ENCODE measurements at regions of chr4 and their contacts with region 1.

Region 1: DNA sequence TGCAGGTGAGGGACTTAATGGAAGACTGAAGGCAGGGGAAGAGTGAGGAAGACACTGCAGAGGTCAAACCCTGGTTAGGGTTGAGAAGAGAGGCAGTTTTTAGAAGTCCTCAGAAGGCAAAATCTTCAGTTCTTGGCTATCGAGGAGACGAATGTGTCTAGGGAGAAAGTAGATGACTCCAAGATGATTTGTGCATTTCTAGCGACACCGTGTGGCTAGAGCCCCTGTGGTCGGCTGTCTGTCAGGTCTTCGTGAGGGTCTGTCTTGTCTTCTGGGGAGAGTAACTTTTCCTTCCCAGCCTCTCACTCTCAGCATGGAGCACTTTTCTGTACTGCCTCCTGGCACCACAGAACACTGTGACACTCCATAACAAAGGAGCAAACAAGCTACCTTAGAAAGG is 458.1 kb downstream of the STIM2 start:
- DNase-seq: no peak
- H3K4me3 ChIP-seq: no peak overlapping the region
- H3K27ac ChIP-seq: no peak overlapping the region
- H3K4me1 ChIP-seq: peaks cover 0 to 13% (median 10%) of the 10 kb centered on the region in 4 donors
- H3K27me3 ChIP-seq: no peaks in the 10 kb centered on the region
- CTCF ChIP-seq: peak in 2 of 3 experiments; percentile 20 to 39
- EP300 ChIP-seq: no peak
- POLR2A ChIP-seq: no peak

Region 2: DNA sequence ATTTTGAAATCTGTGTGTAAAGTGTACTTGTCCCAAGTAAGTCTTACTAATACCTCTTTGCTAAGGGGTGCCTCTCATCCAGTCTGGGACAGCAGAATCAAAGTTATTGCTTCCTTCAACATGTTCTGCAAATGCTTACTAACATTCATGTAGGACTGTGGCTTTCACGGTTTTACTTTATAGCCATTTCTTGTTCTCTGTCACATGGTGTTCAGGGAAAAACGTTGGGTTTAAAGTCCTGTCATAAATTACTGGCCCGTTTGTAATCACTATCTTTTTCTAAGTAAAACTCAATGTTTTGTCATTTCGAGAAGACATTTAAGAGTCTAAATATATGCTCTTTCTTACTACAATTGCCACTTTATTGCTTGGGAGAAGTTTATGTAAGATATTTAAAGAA is 137.1 kb before region 1 on chr4:
- intact Hi-C with region 1: loop called (anchors 5 kb)
- DNase-seq: no peak
- H3K4me3 ChIP-seq: no peak overlapping the region
- H3K27ac ChIP-seq: no peak overlapping the region
- H3K4me1 ChIP-seq: peaks cover 0 to 6% (median 0%) of the 10 kb centered on the region in 4 donors
- H3K27me3 ChIP-seq: no peaks in the 10 kb centered on the region
- CTCF ChIP-seq: no peak
- EP300 ChIP-seq: no peak
- POLR2A ChIP-seq: no peak